Calu3 (cell line): ENCODE measurements at regions of chr20 and their contacts with region 1.

Region 1: DNA sequence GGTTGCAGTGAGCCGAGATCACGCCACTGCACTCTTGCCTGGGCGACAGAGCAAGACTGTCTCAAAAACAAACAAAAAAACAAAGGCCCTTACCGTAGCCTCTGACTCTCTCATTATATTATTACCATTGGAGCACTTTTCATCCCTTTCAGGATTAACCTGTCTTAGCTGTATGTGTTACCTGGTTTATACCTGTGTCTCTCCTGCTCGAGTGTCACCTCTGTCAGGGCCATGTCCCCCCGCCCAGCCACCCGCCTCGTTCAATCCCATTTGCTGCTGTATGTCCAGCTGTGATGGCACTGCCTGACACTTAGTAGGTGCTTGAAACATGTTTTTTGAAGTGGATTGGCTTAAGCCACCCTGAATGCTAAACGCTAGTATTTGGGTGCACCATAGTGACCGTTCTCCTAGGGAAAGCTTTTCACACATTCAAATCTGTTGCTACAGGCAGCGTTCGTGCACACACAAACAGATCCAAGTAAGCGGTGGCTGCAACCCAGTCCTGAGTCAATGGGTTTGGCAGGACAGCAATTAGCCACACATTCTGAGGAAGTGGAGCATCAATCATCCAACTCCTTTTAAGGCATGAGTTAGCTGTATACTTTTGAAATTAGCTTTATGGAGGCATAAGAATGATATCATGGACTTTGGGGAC is 98.9 kb upstream of the ZNF217 start:
- DNase-seq: no peak
- H3K4me3 Mint-ChIP-seq: no peak overlapping the region
- H3K27ac Mint-ChIP-seq: no peak overlapping the region
- H3K4me1 Mint-ChIP-seq: peaks cover 17% of the 10 kb centered on the region
- H3K27me3 Mint-ChIP-seq: no peaks in the 10 kb centered on the region
- CTCF ChIP-seq: no peak

Region 2: DNA sequence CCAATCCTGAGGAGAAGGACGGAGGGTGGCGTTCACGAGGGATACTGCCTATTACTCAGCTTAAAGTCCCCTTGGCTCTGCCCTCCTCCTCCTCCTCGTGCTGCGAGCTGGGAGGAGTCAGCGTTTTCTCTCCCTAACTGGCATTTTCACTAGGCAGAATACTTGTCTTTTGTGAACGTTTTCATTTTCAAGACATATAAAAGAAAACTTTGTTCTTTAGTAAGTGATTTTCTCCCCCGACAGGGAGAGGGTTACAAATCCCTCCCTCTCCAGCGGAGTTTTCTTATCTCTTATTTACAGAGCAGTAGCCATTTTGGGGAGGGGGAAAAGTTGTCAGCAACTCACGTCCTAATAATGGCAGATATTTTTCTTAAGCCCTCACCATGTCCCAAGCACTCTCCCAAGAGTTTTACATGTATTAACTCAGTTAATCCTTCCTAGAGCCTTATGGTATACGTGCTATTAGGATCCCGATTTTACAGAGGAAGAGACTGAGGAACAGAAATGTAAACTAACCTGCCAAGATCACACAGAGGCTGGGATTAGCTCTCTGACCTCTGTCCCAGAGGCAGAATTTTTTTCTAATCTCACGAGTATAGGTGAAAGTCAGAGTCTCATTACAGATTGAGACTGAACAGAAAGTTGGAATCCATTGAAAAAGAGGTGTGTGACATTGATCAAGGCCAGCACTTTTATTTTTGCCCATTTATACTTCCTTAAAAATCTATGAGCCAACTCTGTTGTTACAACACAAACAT is 68.9 kb before region 1 on chr20:
- CTCF ChIA-PET with region 1: interaction called, 3 read pairs
- intact Hi-C with region 1: loop called (anchors 5 kb)
- DNase-seq: peak; percentile 71
- H3K4me3 Mint-ChIP-seq: peak overlapping the region; percentile 67
- H3K27ac Mint-ChIP-seq: peak overlapping the region; percentile 99
- H3K4me1 Mint-ChIP-seq: peaks cover 40% of the 10 kb centered on the region
- H3K27me3 Mint-ChIP-seq: no peaks in the 10 kb centered on the region
- CTCF ChIP-seq: no peak

Region 3: DNA sequence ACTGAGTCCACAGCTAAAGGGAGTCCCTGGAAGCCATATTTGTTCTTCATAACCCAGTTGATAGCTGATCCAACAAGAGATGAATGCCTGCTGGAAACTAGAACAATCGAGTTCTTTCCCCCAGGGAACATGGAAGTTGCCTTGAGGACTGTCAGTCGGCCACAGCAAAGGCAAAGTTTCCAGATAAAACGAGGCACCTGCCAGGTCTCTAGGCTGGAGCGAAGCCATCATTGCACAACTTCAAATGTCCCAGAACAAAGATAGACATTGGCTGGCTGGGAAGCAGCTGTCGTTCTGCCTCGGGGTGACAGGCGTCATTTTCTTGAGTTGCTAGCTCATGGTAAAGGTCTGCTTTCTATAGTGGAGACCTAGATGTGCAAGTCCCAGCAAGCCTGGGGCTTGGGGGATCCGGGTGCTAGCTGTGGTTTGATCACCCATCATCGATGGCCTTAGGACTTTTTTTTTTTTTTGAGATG is 85.5 kb after region 1 on chr20:
- CTCF ChIA-PET with region 1: no interaction called
- intact Hi-C with region 1: no loop called
- DNase-seq: no peak
- H3K4me3 Mint-ChIP-seq: no peak overlapping the region
- H3K27ac Mint-ChIP-seq: no peak overlapping the region
- H3K4me1 Mint-ChIP-seq: peaks cover 21% of the 10 kb centered on the region
- H3K27me3 Mint-ChIP-seq: no peaks in the 10 kb centered on the region
- CTCF ChIP-seq: no peak